IMR-90 (cell line): ENCODE measurements at regions of chr12 and their contacts with region 1.

Region 1: GRCh38 chr12:21607701-21608100 is 3.1 kb upstream of the GYS2 start:
- DNase-seq: peak; percentile 33
- ATAC-seq: peak; percentile 61; the same call in 1 of the 2 replicates
- H3K4me3 ChIP-seq: no peak overlapping the region
- H3K27ac ChIP-seq: no peak overlapping the region
- H3K4me1 ChIP-seq: no peaks in the 10 kb centered on the region
- H3K27me3 ChIP-seq: peaks cover 2% of the 10 kb centered on the region; the same call in 1 of the 2 replicates
- CTCF ChIP-seq: peak; percentile 38
- POLR2A ChIP-seq: no peak
- RAD21 ChIP-seq: peak; percentile 48

Region 2: DNA sequence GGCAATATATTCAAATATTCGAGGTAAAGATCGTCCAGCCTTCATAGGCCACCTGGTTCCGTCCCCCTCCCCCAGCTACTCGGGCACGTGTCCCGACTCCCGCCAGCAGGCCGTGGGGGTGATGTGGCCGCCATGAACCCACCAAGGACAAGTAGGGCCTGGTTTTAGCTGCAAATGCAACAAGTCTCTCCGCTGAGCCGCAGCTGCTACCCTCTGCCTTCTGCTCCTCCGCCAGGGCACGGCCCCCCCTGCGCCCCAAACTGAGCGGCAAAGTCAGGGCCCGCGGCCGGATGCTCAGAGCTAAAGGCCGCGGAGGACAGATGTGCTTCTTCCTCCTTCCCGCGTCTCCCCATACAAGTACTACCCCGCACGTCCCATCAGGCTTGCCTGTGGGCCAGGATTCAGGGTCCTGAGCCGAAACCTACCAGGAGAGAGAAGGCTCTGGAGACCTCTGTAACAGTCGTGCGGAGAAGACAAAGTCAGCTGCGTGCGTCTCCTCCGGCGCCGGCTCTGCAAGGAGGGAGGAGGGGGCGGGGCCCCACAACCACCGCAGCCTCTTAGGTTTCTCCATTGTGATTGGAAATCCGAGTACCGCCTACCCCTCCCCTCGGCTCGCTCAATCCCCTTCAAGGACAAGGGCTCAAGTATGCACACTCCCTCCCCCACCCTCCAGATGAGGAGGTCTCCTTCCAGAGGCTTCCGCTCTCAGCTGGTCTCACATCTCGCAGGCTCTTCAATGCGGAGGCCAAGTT is 49.8 kb after region 1 on chr12 and contains the start of gene LDHB:
- CTCF ChIA-PET with region 1: no interaction called
- POLR2A ChIA-PET with region 1: no interaction called
- dilution Hi-C with region 1: no loop called
- in situ Hi-C with region 1: no loop called
- intact Hi-C with region 1: no loop called
- DNase-seq: peak; percentile 96
- ATAC-seq: peak; percentile 99
- H3K4me3 ChIP-seq: peak within 1 kb of the TSS; percentile 81
- H3K27ac ChIP-seq: peak within 1 kb of the TSS; percentile 89
- H3K4me1 ChIP-seq: peaks cover 2% of the 10 kb centered on the region; the same call in 1 of the 2 replicates
- H3K27me3 ChIP-seq: no peaks in the 10 kb centered on the region
- CTCF ChIP-seq: no peak
- POLR2A ChIP-seq: peak; percentile 84
- RAD21 ChIP-seq: no peak
- total RNA-seq, gene LDHB: 623 and 997 TPM in 2 replicates

Region 3: DNA sequence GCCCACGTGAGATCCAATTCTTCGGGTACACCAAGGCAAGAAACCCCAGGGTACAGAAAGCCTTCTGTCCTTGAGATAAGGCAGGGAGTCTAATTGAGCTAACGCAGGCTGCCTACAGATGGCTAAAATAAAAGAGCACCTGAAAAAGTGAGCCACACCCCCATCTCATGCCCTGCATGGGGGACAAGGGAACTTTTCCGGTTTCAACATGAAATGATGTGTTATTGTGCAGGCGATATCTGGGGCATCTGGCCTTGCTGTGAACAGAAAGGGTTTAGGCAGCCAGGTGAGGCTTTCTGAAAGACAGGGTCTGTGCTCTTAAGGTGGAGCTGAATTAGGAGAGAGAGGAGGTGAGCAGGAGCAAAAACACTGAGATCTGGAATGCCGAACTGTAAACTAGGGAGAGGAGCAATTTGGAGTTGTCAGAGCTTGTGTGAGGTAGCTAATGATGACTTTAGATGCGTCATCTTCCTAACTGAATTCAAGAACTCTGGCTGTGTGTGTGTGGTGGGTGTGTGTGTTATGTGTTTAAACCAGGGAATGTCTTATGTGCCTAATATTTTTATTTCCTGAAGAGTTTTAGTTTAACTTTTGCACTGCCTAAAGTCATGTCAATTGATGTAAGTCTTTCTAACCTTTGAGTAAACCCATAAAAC is 70.0 kb after region 1 on chr12:
- CTCF ChIA-PET with region 1: interaction called, 5 read pairs
- POLR2A ChIA-PET with region 1: no interaction called
- dilution Hi-C with region 1: no loop called
- in situ Hi-C with region 1: loop called (anchors 10 kb)
- intact Hi-C with region 1: loop called (anchors 1 kb)
- DNase-seq: peak; percentile 53
- ATAC-seq: 0 out of 2 replicates have a peak, but pooled peaks have one; percentile 27
- H3K4me3 ChIP-seq: no peak overlapping the region
- H3K27ac ChIP-seq: no peak overlapping the region
- H3K4me1 ChIP-seq: no peaks in the 10 kb centered on the region
- H3K27me3 ChIP-seq: peaks cover 11% of the 10 kb centered on the region
- CTCF ChIP-seq: no peak
- POLR2A ChIP-seq: no peak
- RAD21 ChIP-seq: no peak

Region 4: DNA sequence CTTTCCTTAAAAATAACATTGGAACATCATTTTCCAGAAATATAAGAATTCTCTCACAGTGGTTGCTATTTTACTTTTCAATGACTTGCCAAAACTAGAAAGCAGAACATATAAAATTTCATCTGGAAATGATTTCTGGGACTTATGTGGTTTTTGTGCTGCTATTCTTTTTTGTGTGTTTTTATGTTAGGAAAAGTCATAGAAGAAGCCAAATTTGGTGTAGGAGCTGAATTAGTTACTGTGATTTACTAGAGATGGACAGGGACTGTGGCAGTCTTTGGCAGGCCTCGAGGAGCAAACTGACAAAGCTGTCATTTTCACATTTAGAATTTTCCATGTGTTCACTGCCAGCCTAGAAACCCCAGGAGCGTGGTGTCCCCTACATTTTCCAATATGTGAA is 88.3 kb after region 1 on chr12:
- CTCF ChIA-PET with region 1: no interaction called
- POLR2A ChIA-PET with region 1: no interaction called
- dilution Hi-C with region 1: no loop called
- in situ Hi-C with region 1: no loop called
- intact Hi-C with region 1: no loop called
- DNase-seq: no peak
- ATAC-seq: no peak
- H3K4me3 ChIP-seq: no peak overlapping the region
- H3K27ac ChIP-seq: no peak overlapping the region
- H3K4me1 ChIP-seq: 0 out of 2 replicates have a peak, but pooled peaks cover 2% of the 10 kb centered on the region
- H3K27me3 ChIP-seq: no peaks in the 10 kb centered on the region
- CTCF ChIP-seq: no peak
- POLR2A ChIP-seq: no peak
- RAD21 ChIP-seq: no peak

Region 5: GRCh38 chr12:22018860-22019259 is 411.2 kb after region 1 on chr12:
- CTCF ChIA-PET with region 1: no interaction called
- POLR2A ChIA-PET with region 1: no interaction called
- dilution Hi-C with region 1: no loop called
- in situ Hi-C with region 1: no loop called
- intact Hi-C with region 1: loop called (anchors 10 kb)
- DNase-seq: peak; percentile 3
- ATAC-seq: no peak
- H3K4me3 ChIP-seq: no peak overlapping the region
- H3K27ac ChIP-seq: no peak overlapping the region
- H3K4me1 ChIP-seq: no peaks in the 10 kb centered on the region
- H3K27me3 ChIP-seq: no peaks in the 10 kb centered on the region
- CTCF ChIP-seq: peak; percentile 44
- POLR2A ChIP-seq: no peak
- RAD21 ChIP-seq: peak; percentile 32

Region 6: GRCh38 chr12:22032732-22033131 is 425.0 kb after region 1 on chr12:
- CTCF ChIA-PET with region 1: no interaction called
- POLR2A ChIA-PET with region 1: no interaction called
- dilution Hi-C with region 1: no loop called
- in situ Hi-C with region 1: no loop called
- intact Hi-C with region 1: no loop called
- DNase-seq: no peak
- ATAC-seq: no peak
- H3K4me3 ChIP-seq: no peak overlapping the region
- H3K27ac ChIP-seq: no peak overlapping the region
- H3K4me1 ChIP-seq: peaks cover 3% of the 10 kb centered on the region; the same call in 1 of the 2 replicates
- H3K27me3 ChIP-seq: no peaks in the 10 kb centered on the region
- CTCF ChIP-seq: no peak
- POLR2A ChIP-seq: no peak
- RAD21 ChIP-seq: no peak